ENCODE measurements at regions of chr17 and their contacts with region 1.

Region 1: DNA sequence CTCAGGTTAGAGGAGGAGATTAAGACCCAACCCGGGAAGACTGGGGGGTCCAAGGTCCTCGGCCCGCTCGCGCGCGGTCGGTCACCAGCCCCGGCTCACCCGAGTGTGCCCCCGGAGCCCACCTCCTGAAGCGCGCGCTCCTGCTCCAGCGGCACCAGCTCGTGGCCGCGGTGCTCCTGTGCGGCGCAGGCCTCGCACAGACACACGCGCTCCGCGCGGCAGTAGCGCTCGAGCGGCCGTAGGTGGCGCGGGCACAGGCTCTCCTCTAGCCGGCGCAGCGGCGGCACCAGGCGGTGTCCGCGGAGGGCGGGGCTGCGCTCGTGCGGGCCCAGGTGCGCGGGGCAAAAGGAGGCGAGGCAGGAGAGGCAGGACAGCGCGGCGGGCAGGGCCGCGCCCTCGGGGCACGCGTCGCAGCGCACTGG is 618 bp downstream of the TRIM47 start:
- DNase-seq: peak; percentile 67 to 89 (median 76)
- ATAC-seq: peak in 3 of 4 donors; percentile 35 to 67 (median 61)
- H3K4me3 ChIP-seq: peak overlapping the region; percentile 64 to 96 (median 78)
- H3K27ac ChIP-seq: peak overlapping the region; percentile 91 to 99 (median 96)
- H3K4me1 ChIP-seq: peaks cover 14 to 64% (median 42%) of the 10 kb centered on the region in 12 donors
- H3K27me3 ChIP-seq: no peaks in the 10 kb centered on the region
- CTCF ChIP-seq: peak in 9 of 12 donors; percentile 8 to 67 (median 48)
- POLR2A ChIP-seq: no peak

Region 2: GRCh38 chr17:75845049-75845860 is 32.5 kb before region 1 on chr17:
- intact Hi-C with region 1: loop called in 1 of 10 experiments (anchors 1 kb)
- DNase-seq: peak; percentile 86 to 92 (median 90)
- ATAC-seq: peak; percentile 80 to 81 (median 80)
- H3K4me3 ChIP-seq: peak overlapping the region in 3 of 12 donors; percentile 6 to 69 (median 12)
- H3K27ac ChIP-seq: peak overlapping the region; percentile 56 to 99 (median 84)
- H3K4me1 ChIP-seq: peaks cover 36 to 73% (median 58%) of the 10 kb centered on the region in 12 donors
- H3K27me3 ChIP-seq: no peaks in the 10 kb centered on the region
- CTCF ChIP-seq: peak; percentile 64 to 88 (median 80)
- POLR2A ChIP-seq: peak in 1 of 2 donors; percentile 46

Region 3: GRCh38 chr17:76103274-76104139 is 225.7 kb after region 1 on chr17 and contains the start of gene EXOC7:
- intact Hi-C with region 1: no loop called
- DNase-seq: peak; percentile 92 to 95 (median 93)
- ATAC-seq: peak; percentile 97 to 99 (median 98)
- H3K4me3 ChIP-seq: peak within 1 kb of the TSS; percentile 48 to 97 (median 78)
- H3K27ac ChIP-seq: peak within 1 kb of the TSS; percentile 49 to 91 (median 78)
- H3K4me1 ChIP-seq: peaks cover 0 to 26% (median 15%) of the 10 kb centered on the region in 12 donors
- H3K27me3 ChIP-seq: no peaks in the 10 kb centered on the region
- CTCF ChIP-seq: peak in 2 of 12 donors; percentile 3 to 12
- POLR2A ChIP-seq: peak in 1 of 2 donors; percentile 57
- total RNA-seq, gene EXOC7: 64.4 to 107 (median 80.5) TPM

Measured in heart left ventricle (tissue), 16 donors.